ENCODE measurements at regions of chr6 and their contacts with region 1.

Region 1: DNA sequence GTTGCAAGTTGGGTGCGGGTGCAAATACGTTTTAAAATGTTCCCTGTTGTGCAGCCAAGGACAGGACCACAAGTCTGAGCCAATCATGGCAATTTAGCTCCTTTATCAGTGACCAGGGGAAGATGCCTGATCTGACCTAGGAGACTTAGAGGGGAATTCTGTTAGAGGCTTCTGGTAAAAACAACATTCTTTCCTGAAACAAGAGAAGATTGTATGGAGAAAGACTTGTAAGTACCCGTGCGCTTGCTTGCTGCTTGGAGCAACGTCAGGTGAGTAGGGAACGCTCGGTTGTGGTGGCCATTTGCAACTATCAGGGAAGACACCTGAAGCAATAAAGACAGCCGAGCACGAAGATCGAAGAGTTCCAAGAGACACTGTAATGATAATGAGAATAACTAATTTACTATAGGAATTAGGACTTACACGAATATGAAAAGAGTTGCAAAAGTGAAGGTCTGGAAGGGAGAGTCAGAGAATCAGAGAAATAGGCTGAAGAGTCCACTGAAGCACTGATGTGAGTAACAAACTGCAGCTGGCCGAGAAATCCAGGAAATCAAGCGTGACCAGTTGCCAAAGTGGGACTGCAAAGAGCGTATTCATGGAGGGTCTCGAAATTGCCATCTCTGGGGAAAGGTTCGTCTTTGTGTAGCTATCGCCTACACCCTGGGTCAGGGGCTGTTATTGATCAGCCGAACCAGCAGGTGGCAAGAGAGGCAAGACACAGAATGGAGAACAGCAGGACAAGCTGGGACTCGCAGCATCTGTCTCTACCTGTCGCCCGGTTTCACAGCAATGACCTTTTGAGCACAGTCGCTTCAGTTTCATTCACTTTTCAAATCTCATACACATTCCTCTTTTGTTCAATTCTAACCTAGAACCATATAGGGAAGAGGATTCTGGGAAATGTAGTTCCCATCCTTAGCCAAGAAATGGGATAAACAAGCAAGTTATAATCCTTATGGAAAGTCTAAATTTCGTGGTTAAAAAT is 26.1 kb downstream of the LOC128125822 start:
- DNase-seq: peak; percentile 82
- H3K4me3 Mint-ChIP-seq: peak overlapping the region; percentile 77
- H3K27ac Mint-ChIP-seq: no peak overlapping the region
- H3K4me1 Mint-ChIP-seq: peaks cover 16% of the 10 kb centered on the region
- H3K27me3 Mint-ChIP-seq: no peaks in the 10 kb centered on the region

Region 2: DNA sequence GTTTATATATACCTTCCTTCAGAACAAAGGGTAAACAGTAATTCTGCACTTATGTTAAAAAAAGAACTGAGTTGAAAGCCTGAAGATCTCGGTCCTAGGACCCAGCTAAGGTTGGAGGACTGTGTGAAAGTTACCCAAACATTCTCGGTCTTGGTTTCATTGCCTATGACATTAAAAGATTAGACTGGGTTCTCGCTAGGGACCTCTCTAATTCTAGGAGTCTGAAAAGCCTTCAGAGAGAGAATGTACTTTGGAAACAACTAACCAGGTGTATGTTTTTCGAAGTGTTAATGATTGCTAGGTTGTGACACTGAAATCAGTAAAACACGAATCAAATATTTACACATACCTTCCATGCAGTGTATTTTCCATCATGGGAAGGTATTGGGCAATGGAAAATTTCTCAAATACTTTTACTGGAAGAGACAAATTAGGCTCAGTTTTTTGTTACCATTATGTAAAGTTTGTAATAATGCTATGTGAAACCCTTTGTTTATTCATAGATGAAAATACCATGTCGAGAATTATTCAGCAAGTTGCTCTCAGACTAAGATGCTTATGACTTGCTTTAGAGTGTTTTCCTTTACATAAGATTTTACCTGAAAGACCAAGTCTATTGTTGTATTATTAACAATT is 139.7 kb before region 1 on chr6:
- CTCF ChIA-PET with region 1: no interaction called
- POLR2A ChIA-PET with region 1: no interaction called
- intact Hi-C with region 1: no loop called
- DNase-seq: no peak
- H3K4me3 Mint-ChIP-seq: no peak overlapping the region
- H3K27ac Mint-ChIP-seq: no peak overlapping the region
- H3K4me1 Mint-ChIP-seq: no peaks in the 10 kb centered on the region
- H3K27me3 Mint-ChIP-seq: peaks cover 3% of the 10 kb centered on the region

Region 3: GRCh38 chr6:63553208-63553607 is 45.1 kb before region 1 on chr6:
- CTCF ChIA-PET with region 1: no interaction called
- POLR2A ChIA-PET with region 1: no interaction called
- intact Hi-C with region 1: no loop called
- DNase-seq: no peak
- H3K4me3 Mint-ChIP-seq: no peak overlapping the region
- H3K27ac Mint-ChIP-seq: no peak overlapping the region
- H3K4me1 Mint-ChIP-seq: no peaks in the 10 kb centered on the region
- H3K27me3 Mint-ChIP-seq: peaks cover 11% of the 10 kb centered on the region

Region 4: GRCh38 chr6:63635588-63636517 is 37.5 kb after region 1 on chr6 and contains the start of gene PHF3:
- CTCF ChIA-PET with region 1: interaction called, 25 read pairs
- POLR2A ChIA-PET with region 1: interaction called, 4 read pairs
- intact Hi-C with region 1: loop called (anchors 1 kb)
- DNase-seq: peak; percentile 93
- H3K4me3 Mint-ChIP-seq: peak within 1 kb of the TSS; percentile 98
- H3K27ac Mint-ChIP-seq: peak within 1 kb of the TSS; percentile 96
- H3K4me1 Mint-ChIP-seq: peaks cover 45% of the 10 kb centered on the region
- H3K27me3 Mint-ChIP-seq: no peaks in the 10 kb centered on the region
- total RNA-seq, gene PHF3: 43.0 to 43.2 TPM

Region 5: DNA sequence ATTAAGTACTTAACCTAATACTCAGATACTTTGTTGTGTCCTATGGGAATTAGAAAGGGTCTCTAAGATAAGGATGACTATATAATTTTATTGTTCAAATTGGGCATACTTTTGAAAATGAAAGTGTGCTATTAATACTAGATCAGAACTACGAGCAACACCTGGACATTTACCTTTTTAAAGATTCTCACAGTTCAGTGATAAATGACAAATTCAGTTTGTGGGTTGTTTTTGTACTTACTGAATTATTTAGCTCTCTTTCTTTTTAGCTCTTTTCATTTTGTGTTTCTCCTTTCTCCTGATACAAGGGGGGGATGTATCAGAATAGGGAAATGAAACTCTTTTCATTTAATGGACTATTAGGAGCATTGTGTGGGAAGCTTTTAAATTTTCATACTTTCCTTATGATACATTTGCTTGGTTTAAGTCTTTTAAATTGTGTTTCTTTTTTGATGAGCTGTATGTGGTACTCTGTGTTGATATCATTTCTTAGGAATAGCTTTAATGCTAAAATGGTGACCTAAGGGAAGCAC is 84.8 kb after region 1 on chr6:
- CTCF ChIA-PET with region 1: interaction called, 12 read pairs
- POLR2A ChIA-PET with region 1: no interaction called
- intact Hi-C with region 1: no loop called
- DNase-seq: no peak
- H3K4me3 Mint-ChIP-seq: no peak overlapping the region
- H3K27ac Mint-ChIP-seq: no peak overlapping the region
- H3K4me1 Mint-ChIP-seq: peaks cover 47% of the 10 kb centered on the region
- H3K27me3 Mint-ChIP-seq: no peaks in the 10 kb centered on the region

Region 6: DNA sequence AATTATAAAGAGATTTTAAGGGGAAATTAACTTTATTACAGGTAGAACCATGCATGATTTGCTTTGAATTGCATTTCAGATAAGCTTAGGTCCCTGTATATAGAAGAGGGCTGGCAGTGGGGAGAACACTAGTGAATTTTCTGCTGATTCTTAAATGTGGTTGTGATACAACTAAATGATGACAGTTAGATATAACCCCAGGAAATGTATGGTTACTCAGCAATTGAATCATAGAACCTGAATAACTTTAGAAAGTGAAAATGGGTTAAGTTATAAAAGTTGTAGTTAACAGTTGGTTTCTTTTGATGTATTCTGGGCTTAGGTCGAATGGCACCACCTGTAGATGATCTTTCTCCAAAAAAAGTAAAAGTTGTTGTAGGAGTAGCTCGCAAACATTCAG is 107.4 kb after region 1 on chr6:
- CTCF ChIA-PET with region 1: interaction called, 7 read pairs
- POLR2A ChIA-PET with region 1: no interaction called
- intact Hi-C with region 1: loop called (anchors 5 kb)
- DNase-seq: no peak
- H3K4me3 Mint-ChIP-seq: no peak overlapping the region
- H3K27ac Mint-ChIP-seq: no peak overlapping the region
- H3K4me1 Mint-ChIP-seq: peaks cover 11% of the 10 kb centered on the region
- H3K27me3 Mint-ChIP-seq: no peaks in the 10 kb centered on the region

Region 7: DNA sequence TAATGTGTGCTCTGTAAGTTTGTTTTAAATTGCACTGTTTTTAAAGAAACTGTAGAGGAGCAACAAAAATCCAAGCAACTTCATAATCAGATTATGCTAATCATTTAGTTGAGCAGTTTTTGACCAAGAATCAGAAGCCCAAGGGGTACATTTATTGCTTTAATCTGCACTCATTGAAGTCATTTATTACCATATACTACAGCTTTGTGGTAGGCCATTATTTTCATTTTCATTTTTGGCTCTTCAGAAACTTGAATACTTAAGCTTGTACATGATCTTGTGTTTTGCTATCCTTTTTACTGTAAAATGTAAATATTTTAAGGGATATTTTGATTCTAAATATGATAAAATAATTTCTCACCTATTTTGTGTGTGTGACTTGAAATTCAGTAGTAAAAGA is 115.7 kb after region 1 on chr6:
- CTCF ChIA-PET with region 1: interaction called, 10 read pairs
- POLR2A ChIA-PET with region 1: no interaction called
- intact Hi-C with region 1: loop called (anchors 5 kb)
- DNase-seq: no peak
- H3K4me3 Mint-ChIP-seq: no peak overlapping the region
- H3K27ac Mint-ChIP-seq: no peak overlapping the region
- H3K4me1 Mint-ChIP-seq: peaks cover 2% of the 10 kb centered on the region
- H3K27me3 Mint-ChIP-seq: no peaks in the 10 kb centered on the region

Region 8: GRCh38 chr6:63764318-63764916 is 166.1 kb after region 1 on chr6:
- CTCF ChIA-PET with region 1: interaction called, 206 read pairs
- POLR2A ChIA-PET with region 1: no interaction called
- intact Hi-C with region 1: loop called (anchors 1 kb)
- DNase-seq: no peak
- H3K4me3 Mint-ChIP-seq: no peak overlapping the region
- H3K27ac Mint-ChIP-seq: no peak overlapping the region
- H3K4me1 Mint-ChIP-seq: no peaks in the 10 kb centered on the region
- H3K27me3 Mint-ChIP-seq: peaks cover 6% of the 10 kb centered on the region

Region 9: GRCh38 chr6:63808576-63808975 is 210.2 kb after region 1 on chr6:
- CTCF ChIA-PET with region 1: no interaction called
- POLR2A ChIA-PET with region 1: no interaction called
- intact Hi-C with region 1: no loop called
- DNase-seq: no peak
- H3K4me3 Mint-ChIP-seq: no peak overlapping the region
- H3K27ac Mint-ChIP-seq: no peak overlapping the region
- H3K4me1 Mint-ChIP-seq: no peaks in the 10 kb centered on the region
- H3K27me3 Mint-ChIP-seq: peaks cover 2% of the 10 kb centered on the region